ENCODE measurements at regions of chr1 and their contacts with region 1.

Region 1: DNA sequence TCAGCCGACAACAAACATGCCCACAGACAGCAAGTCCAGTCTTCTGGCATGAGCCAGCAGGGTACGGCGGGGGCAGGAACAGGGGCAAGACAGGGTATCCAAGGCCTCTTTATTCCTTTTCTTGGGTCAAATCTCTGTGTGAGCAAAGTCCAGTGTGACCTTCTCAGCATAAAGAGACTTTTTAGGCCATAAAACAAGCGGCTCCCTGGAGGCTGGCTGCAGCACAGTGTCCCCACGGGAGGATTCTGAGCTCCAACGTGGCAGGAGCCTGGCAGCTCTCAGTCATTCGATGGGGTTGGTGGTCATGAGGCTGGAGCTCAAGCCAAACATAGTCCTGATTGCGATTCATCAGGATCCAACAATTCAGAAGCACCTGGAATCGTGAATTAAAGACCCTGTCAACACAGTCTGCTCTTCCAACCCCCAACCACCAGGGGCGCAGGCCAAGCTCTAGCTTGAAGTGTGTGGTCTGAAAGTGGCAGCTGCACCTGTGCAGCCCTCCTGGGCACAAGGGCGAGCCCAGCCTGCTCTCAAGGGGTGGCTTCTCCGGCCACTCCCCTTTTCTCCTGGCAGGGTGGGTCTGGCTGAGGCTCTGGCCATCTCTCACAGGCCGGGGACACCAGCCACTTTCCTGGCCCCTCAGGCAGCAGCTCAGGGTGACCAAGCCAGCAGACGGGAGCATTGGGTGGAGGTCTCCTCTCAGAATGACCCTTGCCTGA is 62.1 kb downstream of the SLC66A1 start:
- DNase-seq: peak in 1 of 2 experiments; percentile 78
- H3K4me3 ChIP-seq: no peak overlapping the region
- H3K27ac ChIP-seq: no peak overlapping the region
- H3K4me1 ChIP-seq: no peaks in the 10 kb centered on the region
- H3K27me3 ChIP-seq: no peaks in the 10 kb centered on the region
- CTCF ChIP-seq: peak; percentile 54 to 80 (median 79)
- EP300 ChIP-seq: no peak
- POLR2A ChIP-seq: no peak
- RAD21 ChIP-seq: peak; percentile 35 to 41; a peak in 3 of 4 replicates

Region 2: DNA sequence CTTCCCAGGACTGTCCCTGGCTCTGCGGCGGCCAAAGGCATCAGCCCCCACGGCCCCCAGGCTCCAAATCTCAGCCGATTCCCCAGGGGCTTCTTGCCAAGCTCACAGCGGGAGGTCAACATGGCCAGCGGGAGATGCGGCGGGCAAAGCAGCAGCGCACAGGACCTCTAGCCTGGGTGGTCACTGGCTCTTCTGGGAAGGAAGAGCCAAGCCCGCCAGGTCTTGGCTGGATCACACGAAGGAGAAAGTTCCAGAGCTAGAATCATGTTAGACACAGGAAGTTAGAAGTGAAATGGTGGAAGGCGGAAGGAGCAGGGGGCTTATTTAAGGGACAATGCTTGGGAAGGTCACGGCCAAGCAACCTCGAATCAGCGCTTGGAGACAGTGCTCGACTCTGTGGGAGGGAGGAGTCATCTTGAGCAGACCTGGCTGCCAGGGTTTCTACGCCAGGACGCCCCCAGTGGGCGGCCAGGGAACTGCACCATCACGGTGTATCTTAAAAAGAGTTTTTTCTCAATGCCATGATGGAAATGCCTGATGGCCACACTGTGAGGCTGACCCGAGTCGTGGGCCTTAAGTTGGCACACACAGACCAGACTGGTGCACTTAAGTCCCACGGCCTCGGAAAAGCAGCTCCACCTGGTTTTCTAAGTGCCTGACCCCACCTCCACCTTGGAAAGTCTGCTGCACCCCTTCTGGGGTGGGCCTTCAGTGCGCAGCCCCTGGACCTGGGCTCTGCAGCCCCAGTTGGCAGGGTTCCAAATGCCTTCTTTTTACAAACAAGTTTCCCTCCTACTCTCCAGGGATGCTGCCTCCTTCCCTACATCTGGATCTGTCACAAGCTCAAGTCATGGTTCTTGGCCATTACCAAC is 32.8 kb before region 1 on chr1:
- CTCF ChIA-PET with region 1: interaction called, 29 read pairs
- POLR2A ChIA-PET with region 1: no interaction called
- DNase-seq: peak; percentile 76 to 96
- H3K4me3 ChIP-seq: no peak overlapping the region
- H3K27ac ChIP-seq: no peak overlapping the region
- H3K4me1 ChIP-seq: peaks cover 0 to 15% (median 10%) of the 10 kb centered on the region in 4 experiments; a peak in 5 of 7 replicates
- H3K27me3 ChIP-seq: no peaks in the 10 kb centered on the region
- CTCF ChIP-seq: peak; percentile 78 to 95 (median 93)
- EP300 ChIP-seq: no peak
- POLR2A ChIP-seq: 0 out of 3 replicates have a peak, but pooled peaks of 1 of the 2 experiments have one; percentile 29
- RAD21 ChIP-seq: peak; percentile 38 to 48

Region 3: GRCh38 chr1:19361611-19362147 is 12.6 kb before region 1 on chr1:
- CTCF ChIA-PET with region 1: interaction called, 29 read pairs
- POLR2A ChIA-PET with region 1: interaction called, 4 read pairs
- DNase-seq: no peak
- H3K4me3 ChIP-seq: no peak overlapping the region
- H3K27ac ChIP-seq: no peak overlapping the region
- H3K4me1 ChIP-seq: peaks cover 0 to 2% (median 0%) of the 10 kb centered on the region in 4 experiments; a peak in 1 of 7 replicates
- H3K27me3 ChIP-seq: no peaks in the 10 kb centered on the region
- CTCF ChIP-seq: no peak
- EP300 ChIP-seq: no peak
- POLR2A ChIP-seq: no peak
- RAD21 ChIP-seq: no peak

Region 4: GRCh38 chr1:19398309-19398760 is 24.1 kb after region 1 on chr1:
- CTCF ChIA-PET with region 1: interaction called, 70 read pairs
- POLR2A ChIA-PET with region 1: interaction called, 3 read pairs
- DNase-seq: no peak
- H3K4me3 ChIP-seq: no peak overlapping the region
- H3K27ac ChIP-seq: no peak overlapping the region
- H3K4me1 ChIP-seq: peaks cover 18 to 30% (median 26%) of the 10 kb centered on the region in 4 experiments
- H3K27me3 ChIP-seq: no peaks in the 10 kb centered on the region
- CTCF ChIP-seq: no peak
- EP300 ChIP-seq: no peak
- POLR2A ChIP-seq: no peak
- RAD21 ChIP-seq: no peak

Region 5: DNA sequence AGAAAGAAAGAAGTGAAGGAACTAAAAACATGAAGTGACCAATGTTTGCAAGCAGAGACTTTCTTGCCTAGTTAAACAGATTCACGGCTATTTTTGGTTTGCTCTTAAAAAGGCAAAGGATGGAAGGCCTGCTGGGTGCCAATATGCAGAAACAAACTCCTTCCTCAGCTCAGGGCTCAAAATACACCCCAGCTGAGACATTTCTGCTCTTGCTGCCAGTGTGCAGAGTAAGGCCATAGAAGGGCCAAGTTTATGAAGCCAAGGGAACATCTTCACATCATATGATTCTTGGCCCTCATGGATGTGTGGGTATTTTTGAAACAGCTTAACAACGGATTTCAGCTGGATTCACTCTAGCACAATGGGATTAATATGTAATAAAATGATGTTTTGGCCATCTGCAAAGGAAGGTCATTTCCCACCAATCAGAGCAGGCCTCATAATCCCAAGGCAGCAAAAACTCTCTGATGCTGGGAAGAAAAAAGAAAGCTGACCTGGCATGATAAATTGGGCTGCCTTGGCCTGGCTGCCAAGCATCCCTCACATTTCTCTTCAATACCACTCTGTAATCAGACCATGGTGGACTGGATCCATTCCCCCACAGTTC is 40.4 kb after region 1 on chr1:
- CTCF ChIA-PET with region 1: interaction called, 14 read pairs
- POLR2A ChIA-PET with region 1: no interaction called
- DNase-seq: no peak
- H3K4me3 ChIP-seq: no peak overlapping the region
- H3K27ac ChIP-seq: no peak overlapping the region
- H3K4me1 ChIP-seq: peaks cover 0 to 5% (median 2%) of the 10 kb centered on the region in 4 experiments; a peak in 1 of 7 replicates
- H3K27me3 ChIP-seq: no peaks in the 10 kb centered on the region
- CTCF ChIP-seq: no peak
- EP300 ChIP-seq: no peak
- POLR2A ChIP-seq: no peak
- RAD21 ChIP-seq: no peak

Measured in H1 (cell line).